AG04449 (cell line): ENCODE measurements at regions of chr5 and their contacts with region 1.

Region 1: GRCh38 chr5:133868946-133869518 is 99.4 kb downstream of the C5orf15 start:
- DNase-seq: no peak
- H3K4me3 ChIP-seq: no peak overlapping the region
- CTCF ChIP-seq: peak; percentile 79

Region 2: GRCh38 chr5:133423618-133424282 is 445.3 kb before region 1 on chr5:
- CTCF ChIA-PET with region 1: interaction called, 15 read pairs
- POLR2A ChIA-PET with region 1: no interaction called
- DNase-seq: no peak
- H3K4me3 ChIP-seq: no peak overlapping the region
- CTCF ChIP-seq: peak; percentile 89

Region 3: GRCh38 chr5:133688391-133688790 is 180.6 kb before region 1 on chr5:
- CTCF ChIA-PET with region 1: no interaction called
- POLR2A ChIA-PET with region 1: no interaction called
- DNase-seq: no peak
- H3K4me3 ChIP-seq: no peak overlapping the region
- CTCF ChIP-seq: no peak

Region 4: GRCh38 chr5:133715622-133716021 is 153.4 kb before region 1 on chr5:
- CTCF ChIA-PET with region 1: no interaction called
- POLR2A ChIA-PET with region 1: no interaction called
- DNase-seq: no peak
- H3K4me3 ChIP-seq: no peak overlapping the region
- CTCF ChIP-seq: no peak

Region 5: DNA sequence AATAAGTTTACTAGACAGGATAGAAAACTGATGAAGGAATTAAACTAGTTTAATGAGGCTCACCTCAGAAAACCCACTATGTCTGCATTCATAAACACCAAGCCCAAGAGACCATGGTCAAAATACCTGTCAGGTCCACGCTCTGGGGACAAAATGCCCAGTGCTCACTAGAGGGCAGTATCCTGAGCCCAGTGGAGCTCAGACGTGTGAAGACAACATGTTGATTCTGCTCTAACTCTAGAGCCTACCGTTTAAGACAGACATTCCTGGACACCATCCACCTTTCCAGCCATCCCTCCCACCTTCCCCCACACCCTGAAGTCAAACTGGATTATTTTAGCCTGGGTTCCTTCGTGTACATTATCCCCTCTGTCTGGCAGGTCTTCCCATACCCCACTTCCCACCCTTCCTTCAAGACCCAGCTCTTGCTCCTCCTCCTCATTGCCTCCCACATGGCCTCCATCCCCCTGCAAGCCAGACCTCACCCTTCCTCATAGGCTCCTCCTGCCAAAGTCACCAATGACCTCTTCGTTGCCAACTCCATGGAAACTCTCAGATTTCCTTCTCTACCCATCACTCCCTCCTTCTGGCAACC is 114.4 kb before region 1 on chr5:
- CTCF ChIA-PET with region 1: interaction called, 26 read pairs
- POLR2A ChIA-PET with region 1: no interaction called
- DNase-seq: no peak
- H3K4me3 ChIP-seq: no peak overlapping the region
- CTCF ChIP-seq: peak; percentile 63

Region 6: GRCh38 chr5:133884569-133885311 is 15.7 kb after region 1 on chr5:
- CTCF ChIA-PET with region 1: interaction called, 80 read pairs
- POLR2A ChIA-PET with region 1: no interaction called
- DNase-seq: no peak
- H3K4me3 ChIP-seq: no peak overlapping the region
- CTCF ChIP-seq: no peak

Region 7: DNA sequence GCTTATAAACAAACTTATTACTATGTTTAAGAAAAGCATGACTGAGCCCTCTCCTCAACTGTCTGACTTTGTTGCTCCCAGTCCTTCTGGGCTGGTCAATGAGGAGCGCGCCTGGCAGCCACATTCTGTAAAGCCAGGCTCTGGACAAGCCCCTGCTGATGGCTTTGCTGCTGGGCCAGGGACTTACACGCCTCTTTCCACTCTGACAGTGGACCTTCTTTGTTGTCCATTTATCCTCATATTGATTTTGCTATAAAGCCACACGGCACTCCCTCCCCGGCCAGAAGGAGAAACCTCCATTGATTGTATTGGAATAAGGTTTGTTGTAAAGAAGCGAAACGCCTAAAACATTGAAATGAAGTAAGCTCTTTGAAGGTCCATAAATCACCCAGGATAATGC is 48.8 kb after region 1 on chr5:
- CTCF ChIA-PET with region 1: no interaction called
- POLR2A ChIA-PET with region 1: no interaction called
- DNase-seq: no peak
- H3K4me3 ChIP-seq: no peak overlapping the region
- CTCF ChIP-seq: no peak